Activated T-helper 1 cell treated with anti-CD3 and anti-CD28 coated beads, Interleukin-12 subunit alpha, Interleukin-12 subunit beta, Interleukin-2, Interleukin-4 antibody, amounts not matched to agents 30 ng/mL and 10 ng/mL and 1 ng/mL, durations not matched to agents 14 hours and 24 hours and 36 hours (primary cell): ENCODE measurements at regions of chr2 and their contacts with region 1.

Region 1: GRCh38 chr2:112187805-112188596 is 49.8 kb downstream of the FBLN7 start:
- DNase-seq: peak; percentile 69
- H3K4me3 Mint-ChIP-seq: peak overlapping the region; percentile 45
- H3K27ac Mint-ChIP-seq: peak overlapping the region; percentile 94
- H3K4me1 Mint-ChIP-seq: peaks cover 71% of the 10 kb centered on the region
- H3K27me3 Mint-ChIP-seq: no peaks in the 10 kb centered on the region

Region 2: GRCh38 chr2:112020561-112020960 is 167.4 kb before region 1 on chr2:
- intact Hi-C with region 1: no loop called
- DNase-seq: no peak
- H3K4me3 Mint-ChIP-seq: no peak overlapping the region
- H3K27ac Mint-ChIP-seq: no peak overlapping the region
- H3K4me1 Mint-ChIP-seq: no peaks in the 10 kb centered on the region
- H3K27me3 Mint-ChIP-seq: peaks cover 29% of the 10 kb centered on the region

Region 3: DNA sequence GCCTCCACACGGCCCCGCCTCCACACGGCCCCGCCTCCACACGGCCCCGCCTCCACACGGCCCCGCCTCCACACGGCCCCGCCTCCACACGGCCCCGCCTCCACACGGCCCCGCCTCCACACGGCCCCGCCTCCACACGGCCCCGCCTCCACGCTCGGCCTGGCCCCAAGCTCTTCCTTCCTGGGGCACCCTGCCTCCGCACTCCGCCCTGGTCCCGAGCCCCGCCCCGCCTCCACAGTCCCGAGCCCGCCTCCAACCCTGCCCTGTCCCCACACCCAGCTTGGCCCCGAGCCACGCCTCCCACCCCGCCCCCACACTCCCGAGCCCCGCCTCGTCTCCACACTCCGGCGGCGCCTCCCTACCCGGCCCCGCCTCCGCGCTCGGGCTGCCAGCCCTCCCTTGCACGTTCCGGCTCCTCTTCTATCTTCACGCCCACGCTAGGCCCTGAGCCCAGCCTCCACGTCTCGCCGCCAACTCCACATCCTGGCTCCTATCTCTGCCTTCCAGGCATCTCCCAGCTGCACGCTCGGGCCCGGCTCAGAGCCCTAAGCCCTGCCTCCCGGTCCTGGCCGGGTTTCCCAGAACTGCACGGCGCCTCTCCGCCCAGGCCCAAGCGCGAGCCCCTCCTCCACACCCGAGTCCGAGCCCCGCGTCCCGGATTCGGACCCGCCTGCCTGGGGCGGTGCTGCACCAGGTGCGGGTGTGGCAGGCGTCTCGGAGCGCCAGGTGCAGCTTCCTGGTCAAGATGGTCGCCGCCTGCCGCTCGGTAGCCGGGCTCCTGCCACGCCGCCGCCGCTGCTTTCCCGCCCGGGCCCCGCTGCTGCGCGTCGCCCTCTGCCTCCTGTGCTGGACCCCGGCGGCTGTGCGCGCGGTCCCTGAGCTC is 132.9 kb before region 1 on chr2 and contains the start of gene TMEM87B:
- intact Hi-C with region 1: loop called (anchors 1 kb)
- DNase-seq: peak; percentile 95
- H3K4me3 Mint-ChIP-seq: peak within 1 kb of the TSS; percentile 93
- H3K27ac Mint-ChIP-seq: peak within 1 kb of the TSS; percentile 98
- H3K4me1 Mint-ChIP-seq: peaks cover 43% of the 10 kb centered on the region
- H3K27me3 Mint-ChIP-seq: peaks cover 2% of the 10 kb centered on the region
- total RNA-seq, gene TMEM87B: 15.0 and 16.6 TPM in 2 replicates

Region 4: GRCh38 chr2:112156152-112156986 is 31.6 kb before region 1 on chr2:
- intact Hi-C with region 1: loop called (anchors 2 kb)
- DNase-seq: peak; percentile 31
- H3K4me3 Mint-ChIP-seq: peak overlapping the region; percentile 72
- H3K27ac Mint-ChIP-seq: peak overlapping the region; percentile 63
- H3K4me1 Mint-ChIP-seq: peaks cover 52% of the 10 kb centered on the region
- H3K27me3 Mint-ChIP-seq: peaks cover 3% of the 10 kb centered on the region

Region 5: DNA sequence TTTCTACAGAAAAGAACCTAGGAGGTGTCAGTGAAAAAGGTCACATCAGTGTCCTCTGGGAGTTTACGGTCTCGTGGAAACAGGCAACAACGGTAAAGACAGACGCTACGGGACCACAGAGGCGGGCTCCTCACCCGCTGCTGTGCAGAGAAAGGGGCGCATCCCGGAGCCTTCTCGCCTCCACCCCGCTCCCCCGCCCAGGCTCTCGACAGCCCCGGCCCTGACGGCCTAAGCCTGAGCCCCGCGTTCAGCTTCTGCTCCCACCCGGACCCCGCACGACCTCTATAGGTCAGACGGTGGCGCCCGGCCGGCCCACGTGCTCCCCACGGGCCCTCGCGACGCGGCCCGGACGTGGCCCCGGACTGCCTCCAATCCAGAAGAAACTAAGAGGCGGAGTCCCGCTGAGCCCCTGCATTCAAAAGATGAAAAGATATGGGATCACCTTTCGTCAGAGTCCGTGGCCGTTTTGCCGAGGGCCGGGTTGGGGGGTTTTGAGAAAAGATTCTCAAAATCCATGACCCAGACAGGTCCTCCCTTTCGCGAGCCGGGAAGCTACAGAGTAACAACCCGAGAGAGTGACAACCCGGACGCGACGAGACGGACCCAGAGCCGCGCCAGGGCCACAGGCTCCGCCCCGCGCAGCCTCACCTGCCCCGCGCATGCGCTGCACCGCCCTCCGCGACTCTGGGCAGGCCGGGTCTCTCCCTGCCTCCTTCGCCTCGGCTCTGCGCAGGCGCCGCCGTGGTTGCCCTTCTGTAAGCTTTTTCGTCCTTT is 66.7 kb after region 1 on chr2 and contains the start of gene ZC3H8:
- intact Hi-C with region 1: loop called (anchors 1 kb)
- DNase-seq: peak; percentile 96
- H3K4me3 Mint-ChIP-seq: peak within 1 kb of the TSS; percentile 50
- H3K27ac Mint-ChIP-seq: peak within 1 kb of the TSS; percentile 91
- H3K4me1 Mint-ChIP-seq: peaks cover 27% of the 10 kb centered on the region
- H3K27me3 Mint-ChIP-seq: no peaks in the 10 kb centered on the region
- total RNA-seq, gene ZC3H8: 32.9 and 37.4 TPM in 2 replicates

Region 6: DNA sequence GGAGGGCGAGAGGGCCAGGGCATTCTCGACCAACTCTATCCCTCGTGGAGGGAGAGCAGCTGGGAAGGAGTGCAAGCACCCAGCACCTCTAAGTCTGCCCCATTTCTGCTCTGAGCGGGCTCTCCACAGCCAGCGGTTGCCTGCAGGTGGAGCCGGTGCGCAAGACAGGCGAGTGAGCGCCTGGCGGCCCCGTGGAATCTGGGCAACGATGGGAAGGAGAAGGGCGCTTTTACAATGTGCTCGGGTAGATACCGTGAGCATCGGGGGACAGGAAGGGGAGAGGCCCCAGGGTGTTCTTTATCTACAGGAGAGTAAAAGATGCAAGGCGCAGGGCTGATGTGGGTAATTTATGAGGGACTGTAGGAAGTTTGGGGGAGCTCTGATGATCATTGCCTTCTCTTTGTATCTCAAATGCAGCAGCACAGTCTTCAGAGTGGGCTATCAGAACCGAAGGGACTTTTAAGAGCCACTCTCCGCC is 293.1 kb after region 1 on chr2:
- intact Hi-C with region 1: loop called (anchors 5 kb)
- DNase-seq: peak; percentile 79
- H3K4me3 Mint-ChIP-seq: peak overlapping the region; percentile 87
- H3K27ac Mint-ChIP-seq: peak overlapping the region; percentile 96
- H3K4me1 Mint-ChIP-seq: peaks cover 40% of the 10 kb centered on the region
- H3K27me3 Mint-ChIP-seq: peaks cover 4% of the 10 kb centered on the region